Activated CD8-positive, alpha-beta memory T cell treated with anti-CD3 and anti-CD28 coated beads, Interleukin-2, amount 10 ng/mL, durations not matched to agents 7 days and 5 days (primary cell): ENCODE measurements at regions of chr17 and their contacts with region 1.

Region 1: GRCh38 chr17:45284176-45285140 is 22.6 kb upstream of the SPATA32 start:
- DNase-seq: peak; percentile 61
- ATAC-seq: no peak
- H3K4me3 Mint-ChIP-seq: no peak overlapping the region
- H3K27ac Mint-ChIP-seq: peak overlapping the region; percentile 79
- H3K4me1 Mint-ChIP-seq: peaks cover 27% of the 10 kb centered on the region
- H3K27me3 Mint-ChIP-seq: no peaks in the 10 kb centered on the region

Region 2: DNA sequence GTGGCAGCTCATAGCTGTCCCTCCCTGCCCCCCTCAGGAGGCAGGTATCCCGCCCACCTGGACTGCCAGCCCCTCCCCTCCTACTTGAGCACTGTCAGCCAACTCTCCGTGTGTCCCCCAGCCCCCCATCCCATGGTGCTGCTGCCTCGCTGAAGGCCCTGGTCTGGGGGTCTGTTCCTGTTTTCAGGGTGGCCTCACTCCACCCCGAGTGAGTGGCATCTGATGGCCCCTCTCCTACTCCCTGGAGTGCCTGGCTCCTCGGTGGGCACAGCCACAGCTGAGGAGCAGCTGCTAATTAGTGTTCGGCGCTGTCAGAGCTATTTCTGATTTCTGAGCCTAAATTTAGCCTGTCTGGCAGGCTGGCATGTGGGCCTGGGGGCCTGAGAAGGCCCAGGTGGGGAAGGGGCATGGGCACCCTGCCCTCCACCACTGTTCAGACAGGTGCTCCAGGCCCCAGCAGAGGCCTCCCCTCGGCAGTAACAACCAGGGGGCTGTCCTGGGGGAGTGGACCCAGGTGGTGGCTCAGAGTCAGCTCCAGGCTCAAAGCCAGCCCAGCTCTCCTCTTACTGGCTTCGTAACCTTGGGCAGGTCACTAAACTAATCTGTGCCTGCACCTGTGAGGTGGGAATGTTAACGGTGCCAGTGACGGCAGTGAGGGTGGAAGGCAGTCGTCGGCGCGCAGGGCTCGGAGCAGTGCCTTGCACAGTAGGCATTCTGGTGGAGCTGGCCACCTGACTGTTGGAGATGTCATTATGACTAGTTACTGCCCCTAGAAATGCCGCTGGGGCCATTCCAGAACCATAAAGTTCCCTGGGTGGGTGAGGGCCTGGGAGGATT is 56.3 kb before region 1 on chr17:
- CTCF ChIA-PET with region 1: no interaction called
- DNase-seq: peak; percentile 57
- ATAC-seq: no peak
- H3K4me3 Mint-ChIP-seq: peak overlapping the region; percentile 93
- H3K27ac Mint-ChIP-seq: peak overlapping the region; percentile 100
- H3K4me1 Mint-ChIP-seq: peaks cover 70% of the 10 kb centered on the region
- H3K27me3 Mint-ChIP-seq: no peaks in the 10 kb centered on the region

Region 3: DNA sequence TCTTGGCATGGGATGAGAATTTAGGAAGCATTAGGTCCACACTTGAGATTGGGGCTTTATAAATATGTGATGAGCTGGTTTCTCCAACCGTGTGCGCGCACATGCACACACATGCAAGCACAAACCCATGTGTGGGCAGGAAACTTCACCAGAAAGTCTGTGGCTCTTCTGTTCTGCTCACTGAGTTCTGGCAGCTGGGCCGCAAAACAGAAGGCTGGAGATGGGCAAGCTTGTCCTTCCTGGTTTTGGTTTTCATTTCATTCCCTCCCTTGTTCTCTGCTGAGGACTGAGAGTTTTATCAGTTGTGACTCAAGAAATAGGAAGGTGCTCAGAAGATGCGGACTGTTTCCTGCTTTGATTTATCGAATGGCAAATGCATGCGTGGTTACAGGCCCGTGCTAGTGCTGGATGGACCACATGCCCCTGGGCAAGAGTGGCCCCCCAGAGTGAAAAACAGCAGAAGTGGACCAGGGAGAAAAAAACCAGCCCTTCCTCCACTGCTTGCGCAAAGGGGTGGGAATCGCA is 18.3 kb after region 1 on chr17:
- CTCF ChIA-PET with region 1: interaction called, 13 read pairs
- DNase-seq: peak; percentile 80
- ATAC-seq: peak; percentile 68
- H3K4me3 Mint-ChIP-seq: peak overlapping the region; percentile 55
- H3K27ac Mint-ChIP-seq: peak overlapping the region; percentile 90
- H3K4me1 Mint-ChIP-seq: peaks cover 84% of the 10 kb centered on the region
- H3K27me3 Mint-ChIP-seq: no peaks in the 10 kb centered on the region